CD4-positive, alpha-beta T cell (primary cell): ENCODE measurements at regions of chr7 and their contacts with region 1.

Region 1: GRCh38 chr7:98280791-98281756 is at the start of gene BRI3:
- DNase-seq: peak; percentile 83 to 98 (median 92)
- ATAC-seq: peak; percentile 77
- H3K4me3 ChIP-seq: peak within 1 kb of the TSS; percentile 77
- H3K4me3 Mint-ChIP-seq: peak within 1 kb of the TSS; percentile 90
- H3K27ac ChIP-seq: peak within 1 kb of the TSS; percentile 62 to 73
- H3K27ac Mint-ChIP-seq: peak within 1 kb of the TSS; percentile 91
- H3K4me1 ChIP-seq: peaks cover 51% of the 10 kb centered on the region
- H3K4me1 Mint-ChIP-seq: peaks cover 37% of the 10 kb centered on the region
- H3K27me3 ChIP-seq: no peaks in the 10 kb centered on the region
- H3K27me3 Mint-ChIP-seq: no peaks in the 10 kb centered on the region
- CTCF ChIP-seq: peak; percentile 53
- total RNA-seq, gene BRI3: 68.0 to 76.5 TPM

Region 2: GRCh38 chr7:97872025-97872669 is 408.9 kb before region 1 on chr7 and contains the start of gene ASNS:
- CTCF ChIA-PET with region 1: no interaction called
- POLR2A ChIA-PET with region 1: no interaction called
- intact Hi-C with region 1: loop called in 1 of 2 experiments (anchors 10 kb)
- DNase-seq: peak; percentile 62 to 93 (median 74)
- ATAC-seq: peak; percentile 82
- H3K4me3 ChIP-seq: peak within 1 kb of the TSS; percentile 77
- H3K4me3 Mint-ChIP-seq: peak within 1 kb of the TSS; percentile 91
- H3K27ac ChIP-seq: peak within 1 kb of the TSS; percentile 64 to 77
- H3K27ac Mint-ChIP-seq: peak within 1 kb of the TSS; percentile 81
- H3K4me1 ChIP-seq: peaks cover 19% of the 10 kb centered on the region
- H3K4me1 Mint-ChIP-seq: peaks cover 27% of the 10 kb centered on the region
- H3K27me3 ChIP-seq: no peaks in the 10 kb centered on the region
- H3K27me3 Mint-ChIP-seq: no peaks in the 10 kb centered on the region
- CTCF ChIP-seq: no peak
- total RNA-seq, gene ASNS: 18.3 to 19.5 TPM

Region 3: GRCh38 chr7:98251841-98252639 is 29.0 kb before region 1 on chr7 and contains the start of gene TECPR1:
- CTCF ChIA-PET with region 1: interaction called, 3 read pairs
- POLR2A ChIA-PET with region 1: interaction called, 65 read pairs
- intact Hi-C with region 1: loop called (anchors 1 to 2 kb)
- DNase-seq: peak; percentile 68 to 94 (median 81)
- ATAC-seq: peak; percentile 70
- H3K4me3 ChIP-seq: peak within 1 kb of the TSS; percentile 90
- H3K4me3 Mint-ChIP-seq: peak within 1 kb of the TSS; percentile 94
- H3K27ac ChIP-seq: peak within 1 kb of the TSS; percentile 85 to 93
- H3K27ac Mint-ChIP-seq: peak within 1 kb of the TSS; percentile 98
- H3K4me1 ChIP-seq: peaks cover 64% of the 10 kb centered on the region
- H3K4me1 Mint-ChIP-seq: peaks cover 71% of the 10 kb centered on the region
- H3K27me3 ChIP-seq: no peaks in the 10 kb centered on the region
- H3K27me3 Mint-ChIP-seq: no peaks in the 10 kb centered on the region
- CTCF ChIP-seq: no peak
- total RNA-seq, gene TECPR1: 85.9 to 90.4 TPM

Region 4: DNA sequence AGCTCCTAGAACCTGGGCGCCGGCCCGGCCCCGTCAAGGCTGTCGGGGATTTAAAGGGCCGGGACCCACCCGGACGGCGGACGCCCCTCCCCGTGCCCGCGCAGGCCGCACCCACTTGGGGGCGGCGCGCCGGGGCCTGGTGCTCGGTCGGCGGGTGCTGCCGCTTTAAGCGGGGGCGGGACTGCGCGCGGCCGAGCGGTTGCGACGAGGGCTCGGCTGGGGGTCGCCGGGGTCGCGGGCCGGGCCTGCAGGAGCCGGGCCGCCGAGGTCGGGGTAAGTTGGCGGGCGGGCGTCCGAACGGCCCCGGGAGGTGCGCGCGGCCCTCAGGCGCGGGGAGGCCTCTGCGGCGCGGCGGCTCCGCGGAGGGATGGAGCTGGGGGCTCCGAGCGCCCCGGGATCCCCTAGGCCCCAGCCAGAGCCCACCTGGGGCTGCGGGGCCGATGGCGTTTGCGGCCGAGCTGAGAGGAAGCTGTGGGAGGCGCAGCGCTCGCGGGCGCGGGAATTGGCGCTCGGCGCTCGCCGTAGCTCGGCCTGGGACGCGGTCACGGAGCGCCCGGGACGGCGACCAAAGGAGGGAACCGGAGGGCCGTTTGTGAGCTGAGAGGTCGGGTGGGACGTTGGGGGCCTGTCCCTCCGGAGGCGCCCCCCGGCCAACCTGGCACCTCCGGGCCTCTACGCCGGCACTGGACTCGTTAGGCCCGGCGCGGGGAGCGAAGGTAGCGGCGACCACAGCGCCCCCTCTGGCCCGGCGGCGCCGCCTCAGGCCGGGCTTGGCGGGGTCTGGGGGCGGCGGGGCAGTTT is 597.5 kb after region 1 on chr7 and contains the start of gene TRRAP:
- CTCF ChIA-PET with region 1: no interaction called
- POLR2A ChIA-PET with region 1: interaction called, 3 read pairs
- intact Hi-C with region 1: loop called in 1 of 2 experiments (anchors 5 kb)
- DNase-seq: peak; percentile 60 to 88 (median 70)
- ATAC-seq: peak; percentile 56
- H3K4me3 ChIP-seq: peak within 1 kb of the TSS; percentile 97
- H3K4me3 Mint-ChIP-seq: peak within 1 kb of the TSS; percentile 97
- H3K27ac ChIP-seq: peak within 1 kb of the TSS; percentile 87 to 91
- H3K27ac Mint-ChIP-seq: peak within 1 kb of the TSS; percentile 97
- H3K4me1 ChIP-seq: peaks cover 27% of the 10 kb centered on the region
- H3K4me1 Mint-ChIP-seq: peaks cover 31% of the 10 kb centered on the region
- H3K27me3 ChIP-seq: no peaks in the 10 kb centered on the region
- H3K27me3 Mint-ChIP-seq: no peaks in the 10 kb centered on the region
- CTCF ChIP-seq: peak; percentile 89
- total RNA-seq, gene TRRAP: 47.9 to 48.3 TPM